ENCODE measurements at regions of chr2 and their contacts with region 1.

Region 1: DNA sequence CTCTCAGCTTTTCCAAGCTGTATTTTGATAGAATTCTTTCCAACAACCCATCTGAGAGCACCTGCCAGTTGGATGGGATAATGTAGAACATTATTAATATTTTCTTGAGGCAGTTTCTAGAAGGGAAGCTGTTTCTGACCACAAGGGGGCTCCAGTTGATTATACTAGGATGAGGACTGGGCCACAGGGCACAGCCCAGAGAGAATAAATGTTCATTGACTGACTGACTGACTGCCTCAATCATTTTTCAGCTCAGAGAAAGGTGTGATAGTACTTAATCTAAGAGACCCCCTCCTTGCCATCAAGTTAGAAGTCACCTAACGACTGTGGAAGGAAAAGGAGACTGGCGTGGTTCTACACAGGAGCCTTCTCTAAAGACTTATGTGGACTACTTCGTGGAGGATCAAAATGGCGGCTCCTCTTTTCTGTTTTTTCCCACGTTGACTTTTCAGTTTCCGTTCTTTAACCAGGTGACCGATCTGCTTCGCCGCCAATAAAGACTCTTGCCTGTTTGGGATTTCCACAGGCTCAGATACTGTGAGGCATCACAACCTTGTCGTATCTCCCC is 31.9 kb upstream of the CREG2 start:
- DNase-seq: no peak
- H3K4me3 ChIP-seq: no peak overlapping the region
- H3K27ac ChIP-seq: no peak overlapping the region
- H3K4me1 ChIP-seq: no peaks in the 10 kb centered on the region
- H3K27me3 ChIP-seq: no peaks in the 10 kb centered on the region
- CTCF ChIP-seq: peak; percentile 65 to 81 (median 69)

Region 2: DNA sequence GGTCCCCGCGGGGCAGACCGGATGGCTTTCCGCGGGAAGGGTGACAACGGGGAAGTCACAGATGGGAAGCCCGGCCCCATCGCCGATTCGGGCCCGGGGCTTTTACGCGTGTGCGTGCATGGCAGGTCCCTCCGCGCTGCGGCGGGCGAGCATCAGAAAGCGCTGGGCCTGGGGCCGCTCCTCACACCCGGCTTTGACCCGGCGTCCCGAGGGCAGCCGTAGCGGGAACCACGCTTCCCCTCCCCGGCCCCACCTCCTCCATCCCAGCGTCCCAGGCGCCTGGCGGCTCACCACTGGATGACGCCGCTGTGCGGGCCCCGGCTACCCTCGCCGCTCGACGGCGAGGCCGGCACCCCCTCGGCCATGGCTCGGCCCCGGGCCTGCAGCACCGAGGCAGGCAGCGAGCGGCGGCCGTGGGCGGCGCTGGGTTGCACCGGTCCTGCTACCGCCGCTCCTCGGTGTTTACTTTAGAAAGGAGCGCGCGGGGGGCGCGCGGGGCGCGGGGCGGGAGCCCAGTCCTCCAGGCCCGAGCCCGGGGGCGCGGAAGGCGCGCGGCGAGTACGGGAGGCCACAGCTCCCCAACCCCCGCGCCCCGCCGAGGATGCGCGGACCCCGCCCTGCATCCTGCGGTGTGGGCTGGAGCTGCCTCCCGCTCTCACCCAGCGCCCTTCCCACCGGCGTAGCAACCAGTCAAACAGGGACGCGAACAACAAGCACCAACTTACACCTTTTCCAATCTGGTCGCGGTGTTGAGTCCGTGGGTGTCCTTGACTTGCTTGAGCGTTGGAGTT is 54.9 kb after region 1 on chr2:
- intact Hi-C with region 1: loop called (anchors 5 kb)
- DNase-seq: peak in 1 of 2 donors; percentile 76
- H3K4me3 ChIP-seq: peak overlapping the region; percentile 66 to 87
- H3K27ac ChIP-seq: peak overlapping the region; percentile 60 to 75
- H3K4me1 ChIP-seq: peaks cover 0 to 8% of the 10 kb centered on the region in 2 donors
- H3K27me3 ChIP-seq: no peaks in the 10 kb centered on the region
- CTCF ChIP-seq: no peak

Region 3: GRCh38 chr2:101518578-101519492 is 99.7 kb after region 1 on chr2:
- intact Hi-C with region 1: loop called (anchors 10 kb)
- DNase-seq: no peak
- H3K4me3 ChIP-seq: no peak overlapping the region
- H3K27ac ChIP-seq: no peak overlapping the region
- H3K4me1 ChIP-seq: peaks cover 0 to 13% of the 10 kb centered on the region in 2 donors
- H3K27me3 ChIP-seq: no peaks in the 10 kb centered on the region
- CTCF ChIP-seq: peak in 1 of 3 experiments; percentile 56

Region 4: DNA sequence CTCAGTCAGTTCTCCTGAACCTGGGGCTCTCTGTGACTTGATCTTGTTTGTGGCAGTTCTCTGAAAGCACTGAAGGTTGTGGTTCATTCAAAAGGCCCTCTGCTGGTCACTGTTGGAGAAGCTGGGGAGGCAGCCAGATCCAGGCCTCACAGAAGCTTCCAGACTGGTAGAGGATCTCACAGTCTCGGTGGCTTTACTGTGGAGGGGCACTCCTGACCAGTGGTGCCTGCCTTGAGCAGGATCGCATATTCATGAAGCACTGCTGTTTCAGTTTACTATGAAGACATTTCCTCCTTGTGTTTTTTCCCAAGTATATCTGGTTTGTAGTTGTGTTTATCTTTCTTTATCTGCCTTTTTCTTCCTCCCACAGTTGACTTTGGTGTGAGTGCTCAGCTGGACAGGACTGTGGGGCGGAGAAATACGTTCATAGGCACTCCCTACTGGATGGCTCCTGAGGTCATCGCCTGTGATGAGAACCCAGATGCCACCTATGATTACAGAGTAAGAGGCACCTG is 412.2 kb after region 1 on chr2:
- intact Hi-C with region 1: loop called (anchors 1 kb)
- DNase-seq: peak in 1 of 2 donors; percentile 89
- H3K4me3 ChIP-seq: no peak overlapping the region
- H3K27ac ChIP-seq: peak overlapping the region; percentile 30 to 56
- H3K4me1 ChIP-seq: peaks cover 0 to 28% of the 10 kb centered on the region in 2 donors
- H3K27me3 ChIP-seq: no peaks in the 10 kb centered on the region
- CTCF ChIP-seq: peak; percentile 63 to 76 (median 72)

Measured in ascending aorta (tissue), 2 donors.